B cell (primary cell): ENCODE measurements at regions of chr2 and their contacts with region 1.

Region 1: DNA sequence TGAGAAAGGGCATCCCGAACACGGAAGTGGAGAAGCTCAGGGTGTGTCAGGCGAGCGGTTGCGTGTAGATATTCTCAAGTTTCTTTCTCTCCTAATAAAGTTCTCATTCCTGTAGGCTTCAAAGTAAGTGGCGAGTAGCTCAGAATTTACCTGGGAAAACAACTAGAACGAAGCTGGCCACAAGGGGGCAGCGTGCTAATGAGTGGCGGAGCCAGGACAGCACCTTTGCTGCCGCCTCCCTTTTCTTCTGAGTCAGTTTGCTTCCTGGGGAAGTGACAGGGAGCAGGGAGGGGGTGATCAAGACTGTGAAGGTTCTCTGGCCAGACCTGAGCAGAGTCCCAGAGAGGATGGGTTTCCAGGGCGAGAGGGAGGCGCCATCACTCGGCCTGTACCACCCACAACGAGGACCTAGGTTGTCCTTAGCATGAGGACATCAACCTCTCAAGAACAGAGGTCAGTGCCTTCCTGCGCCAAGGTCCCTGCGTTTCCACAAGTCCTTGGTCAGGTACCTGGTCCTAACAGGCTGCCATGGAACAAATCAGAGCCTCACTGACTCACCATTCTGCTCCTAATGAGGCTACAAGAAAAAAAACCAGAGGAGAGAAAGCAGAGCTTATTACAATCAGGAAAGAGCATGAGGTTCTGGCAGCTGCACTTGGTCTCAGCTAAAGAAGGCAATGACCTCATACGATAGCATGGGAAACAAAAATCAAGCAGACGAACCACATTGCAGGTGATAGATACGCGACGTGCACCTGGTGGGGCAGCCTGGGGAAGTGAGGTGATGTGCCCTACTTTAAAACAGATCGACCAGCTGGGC is 98.6 kb downstream of the PLB1 start:
- DNase-seq: peak; percentile 86
- ATAC-seq: peak; percentile 84
- H3K4me3 ChIP-seq: peak overlapping the region in 3 of 5 experiments; percentile 25 to 35 (median 28)
- H3K4me3 Mint-ChIP-seq: peak overlapping the region; percentile 58
- H3K27ac ChIP-seq: no peak overlapping the region
- H3K27ac Mint-ChIP-seq: no peak overlapping the region
- H3K4me1 ChIP-seq: peaks cover 3 to 9% of the 10 kb centered on the region in 2 donors
- H3K4me1 Mint-ChIP-seq: peaks cover 10% of the 10 kb centered on the region
- H3K27me3 ChIP-seq: no peaks in the 10 kb centered on the region
- H3K27me3 Mint-ChIP-seq: peaks cover 7% of the 10 kb centered on the region
- CTCF ChIP-seq: peak; percentile 84

Region 2: GRCh38 chr2:28030600-28030999 is 563.9 kb before region 1 on chr2:
- CTCF ChIA-PET with region 1: no interaction called
- POLR2A ChIA-PET with region 1: no interaction called
- intact Hi-C with region 1: no loop called
- DNase-seq: no peak
- ATAC-seq: no peak
- H3K4me3 ChIP-seq: no peak overlapping the region
- H3K4me3 Mint-ChIP-seq: no peak overlapping the region
- H3K27ac ChIP-seq: no peak overlapping the region
- H3K27ac Mint-ChIP-seq: no peak overlapping the region
- H3K4me1 ChIP-seq: no peaks in the 10 kb centered on the region
- H3K4me1 Mint-ChIP-seq: no peaks in the 10 kb centered on the region
- H3K27me3 ChIP-seq: no peaks in the 10 kb centered on the region
- H3K27me3 Mint-ChIP-seq: no peaks in the 10 kb centered on the region
- CTCF ChIP-seq: no peak

Region 3: DNA sequence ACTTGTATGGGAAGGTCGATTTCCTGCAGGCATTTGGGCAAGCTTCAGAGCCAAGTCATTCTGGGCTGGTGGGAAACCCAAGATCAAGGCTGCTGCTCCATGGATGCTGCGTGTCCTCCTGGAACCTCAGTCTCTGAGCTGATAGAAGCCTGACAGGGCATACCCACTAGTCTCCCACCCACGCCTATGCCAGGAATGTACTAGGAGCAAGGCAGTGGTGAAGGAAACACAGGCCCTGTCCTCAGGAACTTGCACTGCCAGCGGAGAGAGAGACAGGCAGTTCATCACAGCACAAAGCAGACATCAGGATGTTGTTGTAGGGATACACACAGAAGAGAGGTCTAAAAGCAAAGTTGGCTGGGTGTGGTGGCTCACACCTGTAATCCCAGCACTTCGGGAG is 14.4 kb before region 1 on chr2:
- CTCF ChIA-PET with region 1: interaction called, 17 read pairs
- POLR2A ChIA-PET with region 1: no interaction called
- intact Hi-C with region 1: no loop called
- DNase-seq: no peak
- ATAC-seq: no peak
- H3K4me3 ChIP-seq: no peak overlapping the region
- H3K4me3 Mint-ChIP-seq: no peak overlapping the region
- H3K27ac ChIP-seq: no peak overlapping the region
- H3K27ac Mint-ChIP-seq: no peak overlapping the region
- H3K4me1 ChIP-seq: no peaks in the 10 kb centered on the region
- H3K4me1 Mint-ChIP-seq: no peaks in the 10 kb centered on the region
- H3K27me3 ChIP-seq: no peaks in the 10 kb centered on the region
- H3K27me3 Mint-ChIP-seq: no peaks in the 10 kb centered on the region
- CTCF ChIP-seq: no peak

Region 4: GRCh38 chr2:28628987-28629386 is 34.5 kb after region 1 on chr2:
- CTCF ChIA-PET with region 1: interaction called, 10 read pairs
- POLR2A ChIA-PET with region 1: no interaction called
- intact Hi-C with region 1: no loop called
- DNase-seq: no peak
- ATAC-seq: no peak
- H3K4me3 ChIP-seq: no peak overlapping the region
- H3K4me3 Mint-ChIP-seq: no peak overlapping the region
- H3K27ac ChIP-seq: no peak overlapping the region
- H3K27ac Mint-ChIP-seq: no peak overlapping the region
- H3K4me1 ChIP-seq: peaks cover 15 to 18% of the 10 kb centered on the region in 2 donors
- H3K4me1 Mint-ChIP-seq: peaks cover 16% of the 10 kb centered on the region
- H3K27me3 ChIP-seq: no peaks in the 10 kb centered on the region
- H3K27me3 Mint-ChIP-seq: no peaks in the 10 kb centered on the region
- CTCF ChIP-seq: no peak

Region 5: GRCh38 chr2:28649481-28650214 is 55.1 kb after region 1 on chr2:
- CTCF ChIA-PET with region 1: no interaction called
- POLR2A ChIA-PET with region 1: no interaction called
- intact Hi-C with region 1: no loop called
- DNase-seq: no peak
- ATAC-seq: peak; percentile 21
- H3K4me3 ChIP-seq: no peak overlapping the region
- H3K4me3 Mint-ChIP-seq: peak overlapping the region; percentile 37
- H3K27ac ChIP-seq: no peak overlapping the region
- H3K27ac Mint-ChIP-seq: peak overlapping the region; percentile 50
- H3K4me1 ChIP-seq: peaks cover 0 to 8% of the 10 kb centered on the region in 2 donors
- H3K4me1 Mint-ChIP-seq: peaks cover 14% of the 10 kb centered on the region
- H3K27me3 ChIP-seq: no peaks in the 10 kb centered on the region
- H3K27me3 Mint-ChIP-seq: no peaks in the 10 kb centered on the region
- CTCF ChIP-seq: no peak

Region 6: DNA sequence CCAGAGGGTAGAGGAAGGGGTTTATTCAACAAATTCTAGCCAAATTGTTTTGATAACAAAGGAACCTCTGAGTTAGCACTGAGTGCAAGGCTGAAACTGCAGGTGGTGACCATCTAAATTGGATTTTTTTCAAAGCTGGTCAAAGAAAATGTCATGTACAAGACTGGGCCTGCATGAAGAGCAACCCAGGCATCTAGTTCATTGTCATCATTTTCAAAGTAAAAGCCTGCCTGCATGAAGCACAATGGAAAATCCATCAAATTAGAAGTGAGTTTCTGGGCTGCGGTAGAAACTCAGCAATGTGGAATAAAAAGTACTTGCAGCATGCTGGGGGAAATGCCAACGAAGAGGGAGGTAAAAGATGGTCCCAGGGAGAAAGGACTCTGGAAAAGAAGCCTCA is 76.4 kb after region 1 on chr2:
- CTCF ChIA-PET with region 1: no interaction called
- POLR2A ChIA-PET with region 1: no interaction called
- intact Hi-C with region 1: no loop called
- DNase-seq: no peak
- ATAC-seq: no peak
- H3K4me3 ChIP-seq: no peak overlapping the region
- H3K4me3 Mint-ChIP-seq: no peak overlapping the region
- H3K27ac ChIP-seq: no peak overlapping the region
- H3K27ac Mint-ChIP-seq: no peak overlapping the region
- H3K4me1 ChIP-seq: no peaks in the 10 kb centered on the region
- H3K4me1 Mint-ChIP-seq: no peaks in the 10 kb centered on the region
- H3K27me3 ChIP-seq: no peaks in the 10 kb centered on the region
- H3K27me3 Mint-ChIP-seq: no peaks in the 10 kb centered on the region
- CTCF ChIP-seq: no peak

Region 7: DNA sequence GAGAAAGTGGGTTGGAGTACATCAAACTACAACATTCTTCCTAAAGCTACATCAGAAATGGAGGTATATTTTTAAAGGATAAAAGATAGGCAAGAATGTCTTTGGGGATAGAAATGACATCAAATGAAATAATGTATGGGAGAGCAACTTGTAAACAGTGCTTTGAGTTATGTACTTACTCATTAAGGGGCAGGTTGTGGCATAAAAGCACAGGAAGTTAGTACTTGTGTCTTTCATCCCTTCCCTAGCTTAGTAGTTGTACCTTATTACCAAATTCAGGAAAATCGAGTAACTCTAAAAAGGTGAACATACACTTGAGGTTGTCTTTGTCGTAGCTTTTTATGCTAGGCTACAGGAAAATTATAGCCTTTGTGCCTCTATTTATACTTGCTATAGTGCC is 186.0 kb after region 1 on chr2:
- CTCF ChIA-PET with region 1: interaction called, 18 read pairs
- POLR2A ChIA-PET with region 1: no interaction called
- intact Hi-C with region 1: no loop called
- DNase-seq: no peak
- ATAC-seq: no peak
- H3K4me3 ChIP-seq: no peak overlapping the region
- H3K4me3 Mint-ChIP-seq: no peak overlapping the region
- H3K27ac ChIP-seq: peak overlapping the region in 1 of 2 donors; percentile 3
- H3K27ac Mint-ChIP-seq: no peak overlapping the region
- H3K4me1 ChIP-seq: no peaks in the 10 kb centered on the region
- H3K4me1 Mint-ChIP-seq: peaks cover 5% of the 10 kb centered on the region
- H3K27me3 ChIP-seq: no peaks in the 10 kb centered on the region
- H3K27me3 Mint-ChIP-seq: no peaks in the 10 kb centered on the region
- CTCF ChIP-seq: no peak

Region 8: DNA sequence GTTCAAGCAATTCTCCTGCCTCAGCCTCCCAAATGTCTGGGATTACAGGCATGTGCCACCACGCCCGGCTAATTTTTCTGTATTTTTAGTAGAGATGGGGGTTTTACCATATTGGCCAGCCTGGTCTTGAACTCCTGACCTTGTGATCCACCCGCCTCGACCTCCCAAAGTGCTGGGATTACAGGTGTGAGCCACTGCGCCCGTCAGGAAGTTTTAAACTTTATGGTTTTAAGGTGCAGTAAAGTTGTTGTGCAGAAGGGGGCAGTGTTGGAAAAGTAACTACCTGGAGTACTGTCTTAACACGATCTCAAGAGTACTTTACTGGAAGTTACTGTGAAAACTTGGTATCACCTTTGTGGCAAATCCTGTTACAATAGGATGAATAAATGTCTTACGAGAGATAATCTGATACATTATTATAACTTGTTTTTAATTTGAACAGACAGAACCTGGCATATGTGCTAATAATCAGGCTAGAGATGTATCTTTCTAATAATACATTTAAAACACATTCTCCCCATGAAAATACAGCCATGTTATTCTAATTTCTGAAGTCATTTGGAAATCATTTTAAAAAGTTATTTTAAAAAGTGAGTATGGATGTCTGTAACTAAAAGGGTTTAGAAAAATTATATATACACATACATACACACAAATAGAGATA is 226.9 kb after region 1 on chr2:
- CTCF ChIA-PET with region 1: interaction called, 12 read pairs
- POLR2A ChIA-PET with region 1: no interaction called
- intact Hi-C with region 1: no loop called
- DNase-seq: peak; percentile 79
- ATAC-seq: peak; percentile 89
- H3K4me3 ChIP-seq: no peak overlapping the region
- H3K4me3 Mint-ChIP-seq: no peak overlapping the region
- H3K27ac ChIP-seq: no peak overlapping the region
- H3K27ac Mint-ChIP-seq: no peak overlapping the region
- H3K4me1 ChIP-seq: no peaks in the 10 kb centered on the region
- H3K4me1 Mint-ChIP-seq: peaks cover 3% of the 10 kb centered on the region
- H3K27me3 ChIP-seq: no peaks in the 10 kb centered on the region
- H3K27me3 Mint-ChIP-seq: no peaks in the 10 kb centered on the region
- CTCF ChIP-seq: peak; percentile 90